Activated naive CD4-positive, alpha-beta T cell treated with anti-CD3 and anti-CD28 coated beads for 36 hours (primary cell): ENCODE measurements at regions of chr1 and their contacts with region 1.

Region 1: GRCh38 chr1:25858906-25859789 is at the start of gene AUNIP:
- DNase-seq: peak; percentile 92
- H3K4me3 Mint-ChIP-seq: peak within 1 kb of the TSS; percentile 92
- H3K27ac Mint-ChIP-seq: peak within 1 kb of the TSS; percentile 87
- H3K4me1 Mint-ChIP-seq: peaks cover 15% of the 10 kb centered on the region
- H3K27me3 Mint-ChIP-seq: no peaks in the 10 kb centered on the region
- total RNA-seq, gene AUNIP: 8.4 to 9.1 TPM

Region 2: GRCh38 chr1:25874934-25875855 is 16.0 kb after region 1 on chr1 and contains the start of gene PAQR7:
- CTCF ChIA-PET with region 1: interaction called, 3 read pairs
- intact Hi-C with region 1: loop called (anchors 1 kb)
- DNase-seq: peak; percentile 58
- H3K4me3 Mint-ChIP-seq: peak within 1 kb of the TSS; percentile 84
- H3K27ac Mint-ChIP-seq: peak within 1 kb of the TSS; percentile 18
- H3K4me1 Mint-ChIP-seq: peaks cover 8% of the 10 kb centered on the region
- H3K27me3 Mint-ChIP-seq: no peaks in the 10 kb centered on the region
- total RNA-seq, gene PAQR7: 2.8 to 3.1 TPM

Region 3: GRCh38 chr1:27074175-27074780 is 1215.1 kb after region 1 on chr1:
- CTCF ChIA-PET with region 1: no interaction called
- intact Hi-C with region 1: no loop called
- DNase-seq: no peak
- H3K4me3 Mint-ChIP-seq: no peak overlapping the region
- H3K27ac Mint-ChIP-seq: no peak overlapping the region
- H3K4me1 Mint-ChIP-seq: no peaks in the 10 kb centered on the region
- H3K27me3 Mint-ChIP-seq: no peaks in the 10 kb centered on the region